ENCODE measurements at regions of chr9 and their contacts with region 1.

Region 1: GRCh38 chr9:4315582-4316215 is 15.8 kb upstream of the GLIS3 start:
- DNase-seq: peak; percentile 81

Region 2: DNA sequence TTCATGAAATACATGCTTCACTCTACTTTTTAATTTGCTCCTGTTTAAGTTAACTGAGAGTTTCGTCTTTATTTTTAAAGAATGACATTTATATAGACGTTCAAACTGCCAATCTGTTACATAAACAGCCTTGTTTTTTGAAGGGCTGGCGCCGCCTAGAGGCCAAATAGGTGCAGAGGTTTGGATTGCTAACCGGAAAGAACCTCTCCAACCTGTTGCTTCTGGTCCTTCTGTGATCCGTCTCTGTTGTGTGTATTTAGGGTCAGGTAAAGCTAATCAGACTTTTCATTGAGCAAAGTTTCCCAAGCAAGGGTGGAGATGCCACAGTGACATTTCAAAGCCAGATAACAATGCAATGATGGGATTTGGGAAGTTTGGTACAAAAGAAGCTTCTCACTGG is 23.7 kb after region 1 on chr9:
- intact Hi-C with region 1: loop called (anchors 2 kb)
- DNase-seq: no peak

Region 3: GRCh38 chr9:4366591-4367330 is 51.1 kb after region 1 on chr9:
- intact Hi-C with region 1: loop called (anchors 5 kb)
- DNase-seq: no peak

Region 4: DNA sequence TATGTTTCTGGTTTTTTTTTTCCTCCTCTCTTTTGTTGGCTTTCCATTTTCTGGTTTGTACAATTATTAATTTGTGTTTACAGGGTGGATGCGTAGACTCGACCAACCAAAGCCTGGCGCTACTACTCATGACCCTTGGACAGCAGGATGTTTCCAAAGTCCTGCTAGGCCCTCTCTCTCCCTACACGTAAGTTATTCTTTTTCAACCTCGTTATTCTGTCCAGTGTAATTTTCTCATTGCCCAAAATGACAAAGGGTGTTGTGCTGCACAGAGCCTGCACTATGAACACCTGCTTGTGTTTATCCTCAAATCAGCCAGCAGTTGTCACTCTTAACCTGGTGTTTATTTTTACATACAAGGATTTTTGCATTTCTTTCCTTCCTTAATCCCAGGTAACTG is 533.7 kb after region 1 on chr9:
- intact Hi-C with region 1: no loop called
- DNase-seq: no peak